ENCODE measurements at regions of chr16 and their contacts with region 1.

Region 1: GRCh38 chr16:29805378-29806098 is 791 bp upstream of the MAZ start:
- DNase-seq: peak; percentile 98
- H3K4me3 Mint-ChIP-seq: peak overlapping the region; percentile 87
- H3K27ac Mint-ChIP-seq: peak overlapping the region; percentile 98
- H3K4me1 Mint-ChIP-seq: peaks cover 48% of the 10 kb centered on the region
- H3K27me3 Mint-ChIP-seq: no peaks in the 10 kb centered on the region

Region 2: DNA sequence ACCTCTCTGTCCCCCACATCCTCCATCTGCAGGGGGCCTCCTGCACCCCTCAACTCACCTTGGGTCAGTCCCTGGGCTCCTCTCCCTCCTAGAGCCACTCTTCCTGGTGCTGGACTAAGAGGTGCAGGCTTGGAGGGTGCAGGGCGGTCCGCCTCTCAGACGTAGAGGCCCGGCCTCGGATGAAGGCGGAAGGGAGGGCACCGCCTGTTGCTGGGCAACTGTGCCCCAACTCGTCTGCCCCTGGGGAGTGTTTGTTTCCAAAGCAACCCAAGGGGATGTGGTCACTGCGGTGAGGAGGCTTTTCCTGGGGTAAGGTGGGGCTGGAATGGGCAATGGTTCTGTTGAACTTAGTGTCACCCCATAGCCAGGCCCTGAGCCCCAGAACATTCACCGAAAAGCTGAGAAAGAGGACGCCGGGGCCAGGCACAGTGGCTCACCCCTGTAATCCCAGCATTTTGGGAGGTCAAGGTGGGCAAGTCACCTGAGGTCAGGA is 59.6 kb before region 1 on chr16 and contains the start of gene C16orf54:
- CTCF ChIA-PET with region 1: interaction called, 3 read pairs
- POLR2A ChIA-PET with region 1: interaction called, 27 read pairs
- DNase-seq: peak; percentile 98
- H3K4me3 Mint-ChIP-seq: peak within 1 kb of the TSS; percentile 98
- H3K27ac Mint-ChIP-seq: peak within 1 kb of the TSS; percentile 93
- H3K4me1 Mint-ChIP-seq: peaks cover 67% of the 10 kb centered on the region
- H3K27me3 Mint-ChIP-seq: no peaks in the 10 kb centered on the region
- total RNA-seq, gene C16orf54: 94.6 to 99.2 TPM

Region 3: DNA sequence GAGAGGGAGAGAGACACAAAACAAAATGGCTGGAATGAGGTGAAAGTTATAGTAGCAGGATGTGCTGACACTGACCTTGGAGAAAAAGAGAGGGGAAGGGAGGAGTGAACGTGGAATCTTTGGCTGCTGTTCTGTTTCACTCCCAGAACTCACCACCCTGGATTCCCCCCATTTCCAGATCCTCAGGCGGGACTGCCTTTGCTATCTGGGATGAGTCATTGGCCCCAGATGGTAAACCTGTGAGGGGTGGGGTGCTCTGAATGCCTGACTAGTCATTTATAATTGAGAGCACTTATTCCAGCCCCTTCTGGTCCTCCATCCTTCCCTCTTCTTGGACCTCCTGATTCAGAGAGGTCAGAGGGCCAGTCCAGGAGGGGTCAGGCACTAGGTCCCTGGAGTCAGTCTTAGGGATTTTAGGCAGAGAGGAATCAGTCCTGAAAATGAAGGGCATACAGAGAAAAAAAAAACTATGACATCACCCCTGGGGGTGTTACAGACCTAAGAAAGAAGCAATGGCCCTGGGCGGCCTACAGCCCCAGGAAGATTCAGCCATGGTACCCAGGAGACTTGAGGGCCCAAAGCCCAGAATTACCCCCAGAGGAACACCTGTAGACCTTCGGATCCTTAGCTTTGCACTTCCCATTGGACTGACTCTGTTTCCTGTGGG is 29.7 kb before region 1 on chr16:
- CTCF ChIA-PET with region 1: no interaction called
- POLR2A ChIA-PET with region 1: no interaction called
- DNase-seq: no peak
- H3K4me3 Mint-ChIP-seq: no peak overlapping the region
- H3K27ac Mint-ChIP-seq: no peak overlapping the region
- H3K4me1 Mint-ChIP-seq: no peaks in the 10 kb centered on the region
- H3K27me3 Mint-ChIP-seq: peaks cover 19% of the 10 kb centered on the region

Region 4: GRCh38 chr16:29815793-29816693 is 10.5 kb after region 1 on chr16 and contains the start of gene PAGR1:
- CTCF ChIA-PET with region 1: interaction called, 71 read pairs
- POLR2A ChIA-PET with region 1: interaction called, 206 read pairs
- DNase-seq: peak; percentile 99
- H3K4me3 Mint-ChIP-seq: peak within 1 kb of the TSS; percentile 94
- H3K27ac Mint-ChIP-seq: peak within 1 kb of the TSS; percentile 94
- H3K4me1 Mint-ChIP-seq: peaks cover 72% of the 10 kb centered on the region
- H3K27me3 Mint-ChIP-seq: peaks cover 11% of the 10 kb centered on the region
- total RNA-seq, gene PAGR1: 26.6 to 28.4 TPM

Region 5: DNA sequence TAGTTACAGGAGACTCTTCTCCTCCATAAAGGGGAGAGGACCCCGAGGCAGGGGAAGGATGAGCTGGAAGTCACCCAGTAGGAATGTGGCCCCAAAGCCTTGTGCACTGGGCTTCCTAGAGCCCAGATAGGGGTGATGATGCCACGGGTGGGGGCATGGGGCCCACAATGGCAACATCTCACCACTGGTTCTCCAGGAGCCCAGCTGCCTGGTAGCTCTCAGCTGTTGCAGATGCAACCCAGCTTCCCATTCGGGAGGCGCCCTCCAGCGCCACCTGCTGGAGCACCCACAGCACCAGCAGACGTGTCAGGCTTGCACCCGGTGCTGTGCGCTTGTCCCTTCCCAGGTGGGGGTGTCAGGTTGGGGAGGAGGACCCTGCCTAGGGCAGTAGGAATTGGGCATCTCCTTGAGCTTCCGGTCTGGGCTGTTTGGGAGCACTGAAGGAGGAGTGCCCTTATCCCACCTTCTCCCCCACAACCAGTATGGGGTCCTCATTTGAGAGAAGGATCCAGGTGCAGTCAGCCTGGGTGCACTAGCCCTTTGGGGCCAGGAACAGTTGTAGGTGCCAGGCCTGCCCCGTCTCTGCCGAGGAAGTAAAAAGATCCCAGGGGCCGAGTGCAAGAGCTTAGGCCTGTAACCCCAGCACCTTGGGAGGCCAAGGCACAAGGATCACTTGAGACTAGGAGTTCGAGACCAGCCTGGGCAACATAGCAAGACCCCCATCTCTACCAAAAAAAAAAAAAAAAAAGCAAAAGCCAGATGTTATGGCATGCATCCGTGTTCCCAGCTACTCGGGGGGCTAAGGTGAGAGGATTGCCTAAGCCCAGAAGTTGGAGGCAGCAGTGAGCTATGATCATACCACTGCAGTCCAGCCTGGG is 43.1 kb after region 1 on chr16:
- CTCF ChIA-PET with region 1: interaction called, 32 read pairs
- POLR2A ChIA-PET with region 1: interaction called, 24 read pairs
- DNase-seq: peak; percentile 85
- H3K4me3 Mint-ChIP-seq: no peak overlapping the region
- H3K27ac Mint-ChIP-seq: peak overlapping the region; percentile 63
- H3K4me1 Mint-ChIP-seq: peaks cover 10% of the 10 kb centered on the region
- H3K27me3 Mint-ChIP-seq: no peaks in the 10 kb centered on the region

Region 6: DNA sequence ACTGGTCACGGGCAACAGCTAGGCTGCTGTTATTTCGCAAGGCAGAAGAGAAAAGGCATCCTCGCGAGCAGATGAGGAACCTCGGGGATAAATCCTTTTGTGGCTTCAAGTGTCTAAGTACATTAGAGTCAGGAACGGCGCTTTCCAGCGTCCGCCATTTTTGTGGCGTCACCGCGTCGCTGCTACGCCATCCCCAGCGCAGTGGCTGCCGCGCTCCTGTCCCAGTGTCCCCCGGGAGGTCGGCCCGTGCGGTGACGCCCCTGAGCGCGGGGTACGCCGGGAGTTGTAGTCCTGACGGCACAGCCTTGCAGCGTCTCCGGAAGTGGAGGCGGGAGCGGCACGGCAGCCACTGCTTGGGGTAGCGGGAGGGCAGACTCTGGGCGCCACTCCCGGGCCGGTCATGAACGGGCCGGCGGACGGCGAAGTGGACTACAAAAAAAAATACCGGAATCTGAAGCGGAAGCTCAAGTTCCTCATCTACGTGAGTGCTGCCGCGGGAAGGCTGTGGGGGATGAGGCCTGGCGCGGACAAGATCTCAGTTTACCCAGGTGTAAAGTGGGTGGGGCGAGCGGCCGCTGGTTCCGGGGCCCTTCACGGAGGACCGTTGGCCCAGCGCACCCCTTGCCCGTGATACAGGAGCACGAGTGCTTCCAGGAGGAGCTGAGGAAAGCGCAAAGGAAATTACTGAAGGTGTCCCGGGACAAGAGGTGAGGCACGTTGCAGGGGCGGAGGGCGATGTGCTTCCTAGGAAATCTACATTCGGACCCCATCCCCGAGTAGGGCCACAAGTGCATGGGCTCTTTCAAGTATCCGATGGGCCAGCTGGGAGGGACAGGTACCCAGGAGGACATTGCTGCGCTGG is 190.6 kb after region 1 on chr16 and contains the start of gene INO80E:
- CTCF ChIA-PET with region 1: no interaction called
- POLR2A ChIA-PET with region 1: interaction called, 20 read pairs
- DNase-seq: peak; percentile 100
- H3K4me3 Mint-ChIP-seq: peak within 1 kb of the TSS; percentile 94
- H3K27ac Mint-ChIP-seq: peak within 1 kb of the TSS; percentile 98
- H3K4me1 Mint-ChIP-seq: peaks cover 45% of the 10 kb centered on the region
- H3K27me3 Mint-ChIP-seq: no peaks in the 10 kb centered on the region
- total RNA-seq, gene INO80E: 102 to 107 TPM

Measured in activated CD4-positive, alpha-beta memory T cell treated with anti-CD3 and anti-CD28 coated beads, Interleukin-2, amount 10 ng/mL, durations not matched to agents 7 days and 5 days (primary cell).